Head of caudate nucleus (tissue), 42 donors: ENCODE measurements at regions of chr6 and their contacts with region 1.

Region 1: GRCh38 chr6:29705389-29706231 is 17.6 kb upstream of the HLA-F start:
- DNase-seq: peak in 28 of 42 donors; percentile 13 to 79 (median 58)

Region 2: GRCh38 chr6:29752451-29753308 is 47.1 kb after region 1 on chr6:
- intact Hi-C with region 1: loop called (anchors 10 kb)
- DNase-seq: peak; percentile 72 to 93 (median 86)

Region 3: GRCh38 chr6:29834564-29835436 is 129.2 kb after region 1 on chr6:
- intact Hi-C with region 1: loop called (anchors 5 kb)
- DNase-seq: peak in 33 of 42 donors; percentile 11 to 77 (median 45)